MCF 10A (cell line): ENCODE measurements at regions of chr16 and their contacts with region 1.

Region 1: GRCh38 chr16:4358831-4359561 is 7.9 kb upstream of the PAM16 start:
- DNase-seq: peak; percentile 48
- H3K4me3 Mint-ChIP-seq: no peak overlapping the region
- H3K27ac Mint-ChIP-seq: no peak overlapping the region
- H3K4me1 Mint-ChIP-seq: no peaks in the 10 kb centered on the region
- H3K27me3 Mint-ChIP-seq: no peaks in the 10 kb centered on the region
- CTCF ChIP-seq: peak; percentile 96

Region 2: DNA sequence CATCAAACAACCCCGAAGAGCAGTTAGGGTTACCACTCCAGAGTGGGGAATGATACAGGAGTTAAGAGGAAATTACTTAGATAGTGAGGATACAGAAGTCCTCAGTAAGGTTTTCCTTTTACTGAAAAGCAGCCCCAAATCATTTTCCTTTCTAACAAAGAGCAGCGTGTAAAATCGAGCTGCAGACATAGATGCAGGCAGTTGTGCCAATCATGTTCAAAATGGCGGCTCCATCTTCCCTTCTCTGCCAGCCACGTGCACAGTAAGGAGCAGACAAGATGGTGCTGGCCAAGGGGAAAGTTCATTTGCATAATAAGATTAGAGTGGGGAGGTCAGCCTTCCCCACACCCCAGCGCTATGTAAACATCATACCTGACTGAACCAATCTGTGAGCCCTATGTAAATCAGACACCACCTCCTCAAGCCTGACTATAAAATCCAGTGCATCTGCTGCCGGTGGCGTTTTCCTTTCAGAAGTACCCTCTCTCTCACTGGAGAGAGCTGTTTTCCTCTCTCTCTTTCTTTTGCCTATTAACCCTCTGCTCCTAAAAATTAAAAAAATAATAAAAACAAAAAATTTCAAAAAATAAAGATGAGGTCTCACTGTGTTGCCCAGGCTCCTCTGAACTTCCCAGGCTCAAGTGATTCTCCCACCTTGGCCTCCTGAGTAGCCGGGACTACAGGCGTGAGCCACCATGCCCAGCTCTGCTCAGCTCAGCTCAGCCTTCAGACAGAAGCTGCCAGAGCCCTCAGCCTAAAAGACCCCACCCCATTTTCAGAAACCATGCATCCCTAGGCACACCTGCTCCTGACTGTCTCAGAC is 114.5 kb before region 1 on chr16:
- CTCF ChIA-PET with region 1: no interaction called
- POLR2A ChIA-PET with region 1: no interaction called
- intact Hi-C with region 1: no loop called
- DNase-seq: peak; percentile 61
- H3K4me3 Mint-ChIP-seq: no peak overlapping the region
- H3K27ac Mint-ChIP-seq: no peak overlapping the region
- H3K4me1 Mint-ChIP-seq: no peaks in the 10 kb centered on the region
- H3K27me3 Mint-ChIP-seq: no peaks in the 10 kb centered on the region
- CTCF ChIP-seq: no peak

Region 3: DNA sequence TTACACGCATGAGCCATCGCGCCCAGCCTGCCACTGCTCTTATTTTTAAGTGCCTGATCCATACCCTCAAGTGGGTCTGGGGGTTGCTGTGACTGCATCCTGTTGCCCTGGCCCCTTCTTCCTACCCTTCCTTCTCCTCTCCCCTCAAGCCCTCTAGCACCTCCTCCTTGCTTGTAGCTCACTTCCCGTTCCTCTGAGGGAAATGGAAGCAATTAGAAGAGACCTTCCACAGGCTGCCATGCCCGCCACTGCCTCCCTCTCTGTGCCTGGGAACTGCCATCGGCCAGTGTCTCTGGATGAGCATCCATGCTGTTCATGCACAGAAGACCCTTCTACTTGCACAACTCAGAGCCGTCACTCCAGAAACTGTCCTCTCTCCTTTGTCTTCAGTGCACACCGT is 75.6 kb before region 1 on chr16:
- CTCF ChIA-PET with region 1: no interaction called
- POLR2A ChIA-PET with region 1: no interaction called
- intact Hi-C with region 1: no loop called
- DNase-seq: no peak
- H3K4me3 Mint-ChIP-seq: no peak overlapping the region
- H3K27ac Mint-ChIP-seq: no peak overlapping the region
- H3K4me1 Mint-ChIP-seq: peaks cover 22% of the 10 kb centered on the region
- H3K27me3 Mint-ChIP-seq: no peaks in the 10 kb centered on the region
- CTCF ChIP-seq: no peak

Region 4: DNA sequence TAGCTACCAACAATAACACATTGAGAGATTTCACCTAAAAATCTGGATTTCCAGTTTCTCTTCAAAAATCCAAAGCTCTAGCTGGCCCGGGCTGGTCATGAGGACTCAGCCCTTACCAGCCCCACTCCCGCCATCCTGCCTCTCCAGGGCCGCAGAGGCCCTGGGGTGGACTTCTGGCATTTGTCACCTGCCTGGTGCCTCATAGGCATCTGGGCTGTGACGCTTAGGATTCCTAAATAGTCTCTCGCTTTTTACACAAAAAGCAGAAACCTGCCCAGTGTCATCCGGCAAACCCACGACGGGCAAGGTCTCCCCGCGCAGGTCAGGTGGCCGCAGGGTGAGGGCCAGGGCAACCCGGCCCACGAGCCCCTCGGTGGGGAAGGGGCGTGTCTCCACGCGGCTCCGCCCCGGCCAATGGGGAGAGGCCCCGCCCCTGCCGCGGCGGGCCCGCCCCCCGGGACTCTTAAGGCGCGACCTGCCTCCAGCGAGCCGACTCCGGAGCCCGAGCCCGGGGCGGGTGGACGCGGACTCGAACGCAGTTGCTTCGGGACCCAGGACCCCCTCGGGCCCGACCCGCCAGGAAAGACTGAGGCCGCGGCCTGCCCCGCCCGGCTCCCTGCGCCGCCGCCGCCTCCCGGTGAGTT is 12.5 kb after region 1 on chr16 and contains the start of gene VASN:
- CTCF ChIA-PET with region 1: interaction called, 22 read pairs
- POLR2A ChIA-PET with region 1: interaction called, 3 read pairs
- intact Hi-C with region 1: no loop called
- DNase-seq: peak; percentile 68
- H3K4me3 Mint-ChIP-seq: peak within 1 kb of the TSS; percentile 69
- H3K27ac Mint-ChIP-seq: no peak within 1 kb of the TSS
- H3K4me1 Mint-ChIP-seq: peaks cover 24% of the 10 kb centered on the region
- H3K27me3 Mint-ChIP-seq: no peaks in the 10 kb centered on the region
- CTCF ChIP-seq: no peak
- total RNA-seq, gene VASN: 4.0 and 7.1 TPM in 2 replicates

Region 5: DNA sequence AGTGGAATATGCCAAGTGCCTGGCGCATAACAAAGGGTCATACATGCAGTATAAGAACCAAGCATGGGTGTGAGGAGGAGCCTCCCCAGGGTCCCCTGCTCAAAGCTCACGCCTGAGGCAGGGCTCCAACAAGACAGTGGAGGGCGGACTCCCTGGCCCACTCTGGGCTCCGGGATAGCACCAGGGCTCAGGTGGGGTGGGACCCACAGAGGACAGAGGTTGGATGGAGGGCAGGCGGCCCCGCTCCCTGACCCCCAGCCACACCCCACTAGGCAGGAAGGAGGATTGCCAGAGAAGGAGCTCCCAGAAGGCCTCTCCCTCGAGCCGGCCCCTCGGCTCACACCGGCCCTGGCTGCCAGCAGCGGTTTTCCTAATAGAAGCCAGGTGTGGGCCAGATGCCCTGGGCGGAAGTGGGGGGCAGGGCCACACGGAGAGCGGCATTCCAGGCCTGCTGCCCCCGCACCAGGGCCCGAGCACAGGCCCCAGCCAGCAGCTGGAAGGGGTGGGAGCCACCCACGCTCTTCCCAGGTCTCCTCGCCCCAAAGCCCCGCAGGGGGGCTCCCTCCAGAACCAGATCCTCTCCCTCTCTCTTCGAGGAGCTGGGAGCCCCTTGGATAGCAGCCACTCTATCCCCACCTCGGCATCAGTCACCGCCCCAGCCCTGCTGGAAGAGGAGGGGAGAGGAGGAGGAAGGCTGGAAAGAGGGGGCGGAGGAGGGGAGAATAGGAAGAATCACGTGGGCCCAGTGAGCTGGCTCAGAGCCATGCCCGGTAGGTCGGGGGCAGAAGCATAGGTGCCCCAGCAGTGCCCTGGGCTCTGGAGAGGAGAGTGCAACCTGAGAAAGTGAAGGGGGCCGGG is 33.6 kb after region 1 on chr16:
- CTCF ChIA-PET with region 1: interaction called, 263 read pairs
- POLR2A ChIA-PET with region 1: no interaction called
- intact Hi-C with region 1: no loop called
- DNase-seq: peak; percentile 77
- H3K4me3 Mint-ChIP-seq: no peak overlapping the region
- H3K27ac Mint-ChIP-seq: peak overlapping the region; percentile 54
- H3K4me1 Mint-ChIP-seq: peaks cover 14% of the 10 kb centered on the region
- H3K27me3 Mint-ChIP-seq: no peaks in the 10 kb centered on the region
- CTCF ChIP-seq: no peak